Activated naive CD4-positive, alpha-beta T cell treated with anti-CD3 and anti-CD28 coated beads for 36 hours (primary cell): ENCODE measurements at regions of chr11 and their contacts with region 1.

Region 1: GRCh38 chr11:6377902-6378639 is 12.2 kb upstream of the SMPD1 start:
- DNase-seq: no peak
- H3K4me3 Mint-ChIP-seq: no peak overlapping the region
- H3K27ac Mint-ChIP-seq: peak overlapping the region; percentile 59
- H3K4me1 Mint-ChIP-seq: peaks cover 27% of the 10 kb centered on the region
- H3K27me3 Mint-ChIP-seq: no peaks in the 10 kb centered on the region

Region 2: DNA sequence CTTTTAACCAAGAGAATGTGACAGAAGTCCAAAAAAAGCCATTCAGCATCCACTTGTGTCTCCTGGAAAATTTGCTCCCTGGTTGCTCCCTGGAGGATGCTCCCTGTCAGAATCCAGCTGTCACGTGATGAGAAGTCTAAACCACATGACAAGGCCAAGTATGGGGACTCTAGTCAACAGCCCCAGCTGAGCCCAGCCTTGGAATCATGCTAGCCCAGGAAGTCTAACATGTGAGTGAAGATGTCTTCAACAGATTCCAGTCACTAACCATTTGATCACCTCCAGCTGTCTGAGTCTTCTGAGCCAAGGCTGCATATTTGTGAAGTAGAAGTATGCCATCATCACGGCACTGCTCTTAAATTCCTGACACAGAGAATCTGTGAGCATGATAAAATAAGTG is 266.4 kb before region 1 on chr11:
- CTCF ChIA-PET with region 1: no interaction called
- intact Hi-C with region 1: no loop called
- DNase-seq: no peak
- H3K4me3 Mint-ChIP-seq: no peak overlapping the region
- H3K27ac Mint-ChIP-seq: no peak overlapping the region
- H3K4me1 Mint-ChIP-seq: no peaks in the 10 kb centered on the region
- H3K27me3 Mint-ChIP-seq: no peaks in the 10 kb centered on the region

Region 3: GRCh38 chr11:6389921-6390724 is 12.1 kb after region 1 on chr11 and contains the start of gene SMPD1:
- CTCF ChIA-PET with region 1: interaction called, 44 read pairs
- intact Hi-C with region 1: no loop called
- DNase-seq: peak; percentile 95
- H3K4me3 Mint-ChIP-seq: peak within 1 kb of the TSS; percentile 91
- H3K27ac Mint-ChIP-seq: peak within 1 kb of the TSS; percentile 98
- H3K4me1 Mint-ChIP-seq: peaks cover 46% of the 10 kb centered on the region
- H3K27me3 Mint-ChIP-seq: no peaks in the 10 kb centered on the region
- total RNA-seq, gene SMPD1: 24.5 to 27.5 TPM

Region 4: GRCh38 chr11:6419009-6419631 is 41.0 kb after region 1 on chr11 and contains the start of gene APBB1:
- CTCF ChIA-PET with region 1: interaction called, 33 read pairs
- intact Hi-C with region 1: loop called (anchors 1 kb)
- DNase-seq: peak; percentile 75
- H3K4me3 Mint-ChIP-seq: peak within 1 kb of the TSS; percentile 76
- H3K27ac Mint-ChIP-seq: peak within 1 kb of the TSS; percentile 77
- H3K4me1 Mint-ChIP-seq: peaks cover 3% of the 10 kb centered on the region
- H3K27me3 Mint-ChIP-seq: no peaks in the 10 kb centered on the region
- total RNA-seq, gene APBB1: 44.5 to 45.1 TPM

Region 5: DNA sequence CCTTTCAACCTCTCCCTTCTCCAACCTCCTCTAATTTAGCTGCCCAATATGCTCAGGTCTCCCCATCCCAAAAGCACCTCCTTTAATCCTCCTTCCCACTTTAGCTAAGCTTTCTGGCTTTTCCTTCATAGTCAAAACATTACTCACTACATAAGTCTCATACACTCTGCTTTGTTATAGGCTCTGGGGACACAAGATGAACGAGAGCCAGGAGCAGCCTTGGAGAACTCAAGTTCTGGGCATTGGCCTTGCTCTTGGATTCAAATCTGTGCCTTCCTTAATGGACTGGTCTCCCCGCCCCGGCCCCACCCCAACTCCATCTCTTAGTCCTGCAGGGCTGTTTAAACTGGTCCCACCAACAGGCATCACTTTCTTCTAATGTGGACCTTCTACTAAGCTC is 74.1 kb after region 1 on chr11:
- CTCF ChIA-PET with region 1: interaction called, 736 read pairs
- intact Hi-C with region 1: no loop called
- DNase-seq: no peak
- H3K4me3 Mint-ChIP-seq: no peak overlapping the region
- H3K27ac Mint-ChIP-seq: no peak overlapping the region
- H3K4me1 Mint-ChIP-seq: no peaks in the 10 kb centered on the region
- H3K27me3 Mint-ChIP-seq: no peaks in the 10 kb centered on the region

Region 6: DNA sequence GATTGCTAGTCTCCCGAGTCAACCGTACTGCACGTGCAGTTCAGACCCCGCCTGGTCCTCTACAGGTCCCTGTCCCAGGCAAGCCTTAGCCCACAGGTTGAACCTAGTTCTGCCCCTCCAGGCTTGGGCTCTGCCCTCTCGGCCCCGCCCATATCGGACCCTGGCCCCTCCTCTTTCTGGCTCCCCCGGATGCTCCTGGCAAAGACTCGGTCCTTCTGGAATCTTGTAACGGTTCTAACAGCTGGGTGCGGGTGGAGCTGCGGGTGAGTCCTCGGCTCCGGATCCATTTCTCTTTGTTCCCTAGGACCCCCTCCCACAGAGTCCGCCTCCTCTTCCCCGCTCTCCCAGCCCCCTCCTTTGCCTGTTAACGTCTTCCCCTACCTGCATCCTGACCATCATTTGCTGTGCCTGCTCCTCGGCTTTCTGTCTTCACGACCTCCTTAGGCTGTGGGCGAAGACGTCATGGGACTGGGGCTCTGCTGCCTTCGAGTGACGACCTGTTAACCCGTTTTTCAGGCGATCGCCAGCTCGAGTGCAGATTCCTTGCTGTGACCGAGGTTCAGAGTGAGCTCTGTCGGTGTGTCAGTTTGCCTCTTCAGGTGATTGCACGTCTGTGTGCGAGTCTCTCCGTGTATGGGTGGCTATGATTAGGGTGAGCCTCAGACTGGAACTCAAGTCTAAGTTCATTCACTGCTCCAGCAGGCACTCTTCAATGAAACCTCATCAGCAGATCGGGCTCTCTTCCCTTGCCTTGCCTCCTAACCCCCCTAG is 119.2 kb after region 1 on chr11 and contains the start of gene DNHD1:
- CTCF ChIA-PET with region 1: interaction called, 21 read pairs
- intact Hi-C with region 1: no loop called
- DNase-seq: no peak
- H3K4me3 Mint-ChIP-seq: no peak within 1 kb of the TSS
- H3K27ac Mint-ChIP-seq: no peak within 1 kb of the TSS
- H3K4me1 Mint-ChIP-seq: no peaks in the 10 kb centered on the region
- H3K27me3 Mint-ChIP-seq: no peaks in the 10 kb centered on the region
- total RNA-seq, gene DNHD1: 18.2 to 19.3 TPM

Region 7: GRCh38 chr11:6531267-6531752 is 153.2 kb after region 1 on chr11:
- CTCF ChIA-PET with region 1: interaction called, 12 read pairs
- intact Hi-C with region 1: no loop called
- DNase-seq: peak; percentile 24
- H3K4me3 Mint-ChIP-seq: no peak overlapping the region
- H3K27ac Mint-ChIP-seq: no peak overlapping the region
- H3K4me1 Mint-ChIP-seq: peaks cover 16% of the 10 kb centered on the region
- H3K27me3 Mint-ChIP-seq: no peaks in the 10 kb centered on the region

Region 8: GRCh38 chr11:6757373-6757967 is 379.4 kb after region 1 on chr11:
- CTCF ChIA-PET with region 1: interaction called, 14 read pairs
- intact Hi-C with region 1: loop called (anchors 2 kb)
- DNase-seq: peak; percentile 86
- H3K4me3 Mint-ChIP-seq: no peak overlapping the region
- H3K27ac Mint-ChIP-seq: no peak overlapping the region
- H3K4me1 Mint-ChIP-seq: peaks cover 10% of the 10 kb centered on the region
- H3K27me3 Mint-ChIP-seq: no peaks in the 10 kb centered on the region